Activated CD4-positive, alpha-beta T cell treated with anti-CD3 and anti-CD28 coated beads for 36 hours (primary cell): ENCODE measurements at regions of chr3 and their contacts with region 1.

Region 1: DNA sequence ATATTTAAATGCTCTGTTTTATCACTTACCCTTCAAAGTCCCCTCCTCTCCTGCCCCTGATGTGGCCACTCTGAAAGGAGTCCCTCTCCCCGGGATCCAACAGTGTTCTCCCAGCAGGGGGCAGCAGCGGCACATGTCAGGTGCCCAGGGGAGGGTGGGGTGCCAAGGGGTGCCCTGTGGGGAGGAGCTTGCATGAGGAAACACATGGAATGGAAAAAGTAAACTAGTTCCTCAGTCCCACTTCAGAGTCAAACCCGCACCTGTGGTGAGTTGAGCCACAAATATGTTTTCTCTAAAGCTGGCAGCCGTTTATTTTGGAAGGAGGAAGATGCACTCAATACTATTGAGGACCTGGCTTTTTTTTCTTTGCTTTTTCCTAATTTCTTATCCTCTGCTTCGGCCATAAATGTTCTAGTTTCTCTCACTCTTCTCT is 30.1 kb upstream of the NRROS start:
- DNase-seq: peak; percentile 98
- ATAC-seq: peak; percentile 93
- H3K4me3 Mint-ChIP-seq: peak overlapping the region; percentile 39
- H3K27ac Mint-ChIP-seq: peak overlapping the region; percentile 76
- H3K4me1 Mint-ChIP-seq: peaks cover 28% of the 10 kb centered on the region
- H3K27me3 Mint-ChIP-seq: no peaks in the 10 kb centered on the region

Region 2: DNA sequence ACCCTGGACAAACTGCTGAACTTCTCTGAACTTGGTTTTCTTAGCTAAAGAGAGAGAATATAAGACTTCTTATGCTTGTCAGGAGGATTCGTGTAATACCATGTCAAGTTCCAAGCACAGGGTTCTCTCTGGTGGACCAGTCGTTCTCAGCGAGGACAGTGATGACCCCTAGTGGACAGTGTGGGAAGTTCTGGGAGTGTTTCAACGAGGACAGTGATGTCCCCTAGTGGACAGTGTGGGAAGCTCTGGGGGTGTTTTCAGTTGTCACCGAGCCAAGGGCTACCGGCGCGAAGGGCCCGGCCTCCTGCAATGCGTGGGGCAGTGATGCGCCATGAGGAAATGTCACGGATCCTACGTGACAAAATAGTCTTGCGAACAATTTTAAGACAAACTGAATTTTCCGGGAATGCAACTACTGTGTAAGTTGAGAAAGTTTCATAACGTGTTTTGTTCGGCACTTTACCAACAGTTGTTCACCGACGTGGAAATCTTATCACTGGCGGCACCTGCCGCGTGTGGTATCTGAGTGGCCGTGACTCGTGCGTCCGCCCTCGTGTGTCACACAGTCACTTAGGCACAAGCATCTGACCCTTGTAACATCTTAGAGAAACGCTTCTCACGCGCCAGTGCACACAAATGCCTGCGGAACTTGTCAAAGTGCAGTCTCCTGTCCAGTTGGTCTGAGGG is 758.4 kb before region 1 on chr3:
- CTCF ChIA-PET with region 1: no interaction called
- POLR2A ChIA-PET with region 1: no interaction called
- intact Hi-C with region 1: no loop called
- DNase-seq: peak; percentile 94
- ATAC-seq: peak; percentile 99
- H3K4me3 Mint-ChIP-seq: peak overlapping the region; percentile 10
- H3K27ac Mint-ChIP-seq: no peak overlapping the region
- H3K4me1 Mint-ChIP-seq: peaks cover 9% of the 10 kb centered on the region
- H3K27me3 Mint-ChIP-seq: peaks cover 2% of the 10 kb centered on the region

Region 3: DNA sequence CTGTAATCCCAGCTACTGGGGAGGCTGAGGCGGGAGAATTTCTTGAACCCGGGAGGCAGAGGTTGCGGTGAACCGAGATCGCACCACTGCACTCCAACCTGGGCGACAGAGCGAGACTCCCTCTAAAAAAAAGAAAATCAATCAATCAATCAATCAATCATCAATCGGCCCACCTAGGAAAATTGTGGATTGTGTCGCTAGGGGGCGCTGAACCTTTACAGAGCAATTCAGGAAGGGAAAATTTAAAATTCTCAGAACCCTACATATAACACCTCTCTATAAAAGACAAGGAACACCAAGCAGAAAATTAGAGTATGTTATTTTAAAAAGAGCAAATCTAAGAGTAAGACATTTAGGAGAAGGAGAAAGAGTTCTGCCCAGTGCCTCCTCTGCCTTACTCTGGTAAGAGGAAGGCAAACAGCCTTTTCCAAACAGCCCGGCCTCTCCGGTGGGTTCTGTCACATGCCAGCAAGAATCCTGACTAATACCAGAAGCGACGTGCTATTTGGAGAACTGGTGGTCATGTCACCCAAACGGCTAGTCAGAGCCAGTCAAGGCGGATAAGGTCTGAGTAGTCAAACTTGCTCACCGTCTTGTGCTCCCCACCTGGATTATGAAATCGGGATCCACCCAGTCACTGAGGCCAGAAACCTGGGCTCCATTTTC is 71.9 kb before region 1 on chr3:
- CTCF ChIA-PET with region 1: interaction called, 3 read pairs
- POLR2A ChIA-PET with region 1: no interaction called
- intact Hi-C with region 1: loop called in 1 of 2 experiments (anchors 5 kb)
- DNase-seq: peak; percentile 83
- ATAC-seq: no peak
- H3K4me3 Mint-ChIP-seq: no peak overlapping the region
- H3K27ac Mint-ChIP-seq: no peak overlapping the region
- H3K4me1 Mint-ChIP-seq: no peaks in the 10 kb centered on the region
- H3K27me3 Mint-ChIP-seq: peaks cover 2% of the 10 kb centered on the region

Region 4: GRCh38 chr3:196639483-196640296 is 30.3 kb after region 1 on chr3 and contains the start of gene NRROS:
- CTCF ChIA-PET with region 1: interaction called, 9 read pairs
- POLR2A ChIA-PET with region 1: interaction called, 5 read pairs
- intact Hi-C with region 1: loop called (anchors 1 to 2 kb)
- DNase-seq: peak; percentile 86
- ATAC-seq: peak; percentile 65
- H3K4me3 Mint-ChIP-seq: peak within 1 kb of the TSS; percentile 81
- H3K27ac Mint-ChIP-seq: peak within 1 kb of the TSS; percentile 98
- H3K4me1 Mint-ChIP-seq: peaks cover 62% of the 10 kb centered on the region
- H3K27me3 Mint-ChIP-seq: no peaks in the 10 kb centered on the region
- total RNA-seq, gene NRROS: 19.6 to 19.7 TPM

Region 5: DNA sequence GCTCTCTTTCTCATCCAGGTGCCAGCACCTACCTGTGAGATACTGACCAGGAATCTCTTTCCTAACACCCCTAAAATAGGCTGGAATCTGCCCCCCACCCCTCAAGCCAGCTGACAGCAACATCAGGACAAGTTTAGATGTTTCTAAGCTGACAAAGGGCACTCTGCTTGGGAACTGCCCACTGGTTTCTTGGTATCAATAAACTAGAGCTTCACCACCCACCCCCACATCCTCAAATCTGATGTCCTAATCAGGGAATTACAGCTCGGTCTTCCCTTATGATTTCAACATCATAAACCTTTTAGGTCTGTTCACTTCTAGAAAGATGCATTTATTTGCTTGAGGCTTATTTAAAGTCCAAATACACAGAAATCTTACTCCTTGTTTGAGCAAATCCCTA is 68.0 kb after region 1 on chr3:
- CTCF ChIA-PET with region 1: interaction called, 15 read pairs
- POLR2A ChIA-PET with region 1: no interaction called
- intact Hi-C with region 1: no loop called
- DNase-seq: no peak
- ATAC-seq: peak; percentile 12
- H3K4me3 Mint-ChIP-seq: no peak overlapping the region
- H3K27ac Mint-ChIP-seq: no peak overlapping the region
- H3K4me1 Mint-ChIP-seq: peaks cover 14% of the 10 kb centered on the region
- H3K27me3 Mint-ChIP-seq: no peaks in the 10 kb centered on the region

Region 6: GRCh38 chr3:196837819-196838420 is 228.6 kb after region 1 on chr3:
- CTCF ChIA-PET with region 1: interaction called, 3 read pairs
- POLR2A ChIA-PET with region 1: no interaction called
- intact Hi-C with region 1: loop called in 1 of 2 experiments (anchors 10 kb)
- DNase-seq: peak; percentile 87
- ATAC-seq: peak; percentile 94
- H3K4me3 Mint-ChIP-seq: no peak overlapping the region
- H3K27ac Mint-ChIP-seq: no peak overlapping the region
- H3K4me1 Mint-ChIP-seq: no peaks in the 10 kb centered on the region
- H3K27me3 Mint-ChIP-seq: no peaks in the 10 kb centered on the region

Region 7: GRCh38 chr3:196932600-196932999 is 323.2 kb after region 1 on chr3:
- CTCF ChIA-PET with region 1: no interaction called
- POLR2A ChIA-PET with region 1: no interaction called
- intact Hi-C with region 1: no loop called
- DNase-seq: no peak
- ATAC-seq: no peak
- H3K4me3 Mint-ChIP-seq: no peak overlapping the region
- H3K27ac Mint-ChIP-seq: peak overlapping the region; percentile 43
- H3K4me1 Mint-ChIP-seq: no peaks in the 10 kb centered on the region
- H3K27me3 Mint-ChIP-seq: no peaks in the 10 kb centered on the region

Region 8: DNA sequence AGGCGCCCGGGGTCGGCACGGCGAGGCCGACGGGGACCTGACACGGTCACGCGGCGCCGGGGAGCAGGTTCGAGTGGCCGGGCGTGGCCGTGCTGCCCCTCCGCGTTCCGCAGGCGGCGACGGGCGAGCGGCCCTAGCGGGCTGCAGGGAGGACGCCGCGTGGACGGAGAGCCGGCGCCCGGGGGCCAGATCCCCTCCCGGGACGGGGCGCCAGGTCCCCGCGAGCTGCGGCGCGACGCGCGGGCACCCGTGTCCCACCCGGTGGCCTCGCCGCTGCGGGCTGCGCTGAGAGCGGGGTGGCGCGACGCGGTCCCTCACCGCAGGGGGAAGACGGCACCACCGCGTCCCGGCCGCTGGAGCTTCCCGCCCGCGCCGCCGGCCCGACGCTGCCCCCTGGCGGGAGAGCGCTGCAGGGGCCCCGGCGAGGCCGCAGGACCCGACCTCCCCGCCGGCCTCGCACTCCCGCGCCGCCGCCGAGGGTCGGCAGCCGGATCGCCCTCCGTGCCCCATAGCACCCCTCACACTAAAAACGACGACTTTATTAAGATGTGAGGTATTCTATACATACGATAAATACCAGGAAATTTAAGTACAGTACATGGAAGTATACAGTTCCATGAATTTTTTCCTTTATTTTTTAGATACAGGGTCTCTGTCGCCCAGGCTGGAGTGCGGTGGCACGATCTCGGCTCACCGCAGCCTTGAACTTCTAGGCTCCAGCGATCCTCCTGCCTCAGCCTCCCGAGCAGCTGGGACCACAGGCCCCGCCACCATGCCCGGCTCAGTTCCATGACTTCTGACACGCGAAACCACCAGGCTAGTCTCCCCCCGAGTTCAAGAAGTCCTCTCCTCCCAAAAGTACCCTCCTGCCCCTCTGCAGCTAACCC is 360.5 kb after region 1 on chr3:
- CTCF ChIA-PET with region 1: no interaction called
- POLR2A ChIA-PET with region 1: no interaction called
- intact Hi-C with region 1: loop called in 1 of 2 experiments (anchors 1 kb)
- DNase-seq: peak; percentile 80
- ATAC-seq: peak; percentile 65
- H3K4me3 Mint-ChIP-seq: peak overlapping the region; percentile 63
- H3K27ac Mint-ChIP-seq: peak overlapping the region; percentile 31
- H3K4me1 Mint-ChIP-seq: peaks cover 15% of the 10 kb centered on the region
- H3K27me3 Mint-ChIP-seq: peaks cover 11% of the 10 kb centered on the region